Mammary epithelial cell (primary cell): ENCODE measurements at regions of chr7 and their contacts with region 1.

Region 1: GRCh38 chr7:78702770-78703169 is 750.7 kb downstream of the MAGI2 start:
- DNase-seq: peak; percentile 83
- H3K4me3 ChIP-seq: no peak overlapping the region
- H3K27ac ChIP-seq: no peak overlapping the region
- H3K4me1 ChIP-seq: no peaks in the 10 kb centered on the region
- H3K27me3 ChIP-seq: no peaks in the 10 kb centered on the region
- CTCF ChIP-seq: no peak

Region 2: GRCh38 chr7:78734626-78735025 is 31.9 kb after region 1 on chr7:
- CTCF ChIA-PET with region 1: no interaction called
- dilution Hi-C with region 1: no loop called
- in situ Hi-C with region 1: no loop called
- intact Hi-C with region 1: loop called (anchors 2 kb)
- DNase-seq: peak; percentile 50
- H3K4me3 ChIP-seq: no peak overlapping the region
- H3K27ac ChIP-seq: no peak overlapping the region
- H3K4me1 ChIP-seq: peaks cover 11% of the 10 kb centered on the region
- H3K27me3 ChIP-seq: no peaks in the 10 kb centered on the region
- CTCF ChIP-seq: no peak

Region 3: GRCh38 chr7:78769481-78770101 is 66.8 kb after region 1 on chr7:
- CTCF ChIA-PET with region 1: no interaction called
- dilution Hi-C with region 1: no loop called
- in situ Hi-C with region 1: no loop called
- intact Hi-C with region 1: loop called (anchors 10 kb)
- DNase-seq: no peak
- H3K4me3 ChIP-seq: peak overlapping the region in 2 of 3 experiments; percentile 12 to 23
- H3K27ac ChIP-seq: no peak overlapping the region
- H3K4me1 ChIP-seq: no peaks in the 10 kb centered on the region
- H3K27me3 ChIP-seq: peaks cover 5% of the 10 kb centered on the region
- CTCF ChIP-seq: no peak

Region 4: GRCh38 chr7:79157281-79157680 is 454.5 kb after region 1 on chr7:
- CTCF ChIA-PET with region 1: no interaction called
- dilution Hi-C with region 1: no loop called
- in situ Hi-C with region 1: no loop called
- intact Hi-C with region 1: no loop called
- DNase-seq: no peak
- H3K4me3 ChIP-seq: no peak overlapping the region
- H3K27ac ChIP-seq: no peak overlapping the region
- H3K4me1 ChIP-seq: no peaks in the 10 kb centered on the region
- H3K27me3 ChIP-seq: no peaks in the 10 kb centered on the region
- CTCF ChIP-seq: no peak